ENCODE measurements at regions of chr2 and their contacts with region 1.

Region 1: GRCh38 chr2:75142081-75142480 is 57.2 kb downstream of the TACR1 start:
- DNase-seq: no peak
- ATAC-seq: no peak
- H3K4me3 ChIP-seq: no peak overlapping the region
- H3K27ac ChIP-seq: no peak overlapping the region
- H3K4me1 ChIP-seq: no peaks in the 10 kb centered on the region
- H3K27me3 ChIP-seq: no peaks in the 10 kb centered on the region
- CTCF ChIP-seq: no peak
- EP300 ChIP-seq: no peak
- POLR2A ChIP-seq: no peak
- RAD21 ChIP-seq: no peak

Region 2: GRCh38 chr2:75113231-75113869 is 28.7 kb before region 1 on chr2:
- CTCF ChIA-PET with region 1: no interaction called
- POLR2A ChIA-PET with region 1: no interaction called
- RAD21 ChIA-PET with region 1: no interaction called
- SMC1A ChIA-PET with region 1: interaction called, 11 read pairs
- in situ Hi-C with region 1: no loop called
- intact Hi-C with region 1: no loop called
- DNase-seq: no peak
- ATAC-seq: no peak
- H3K4me3 ChIP-seq: no peak overlapping the region
- H3K27ac ChIP-seq: no peak overlapping the region
- H3K4me1 ChIP-seq: no peaks in the 10 kb centered on the region
- H3K27me3 ChIP-seq: no peaks in the 10 kb centered on the region
- CTCF ChIP-seq: no peak
- EP300 ChIP-seq: no peak
- POLR2A ChIP-seq: no peak
- RAD21 ChIP-seq: no peak